Activated CD4-positive, alpha-beta memory T cell treated with anti-CD3 and anti-CD28 coated beads for 36 hours (primary cell): ENCODE measurements at regions of chr11 and their contacts with region 1.

Region 1: GRCh38 chr11:1837171-1838076 is 1.4 kb upstream of the TNNI2 start:
- DNase-seq: peak; percentile 83
- H3K4me3 Mint-ChIP-seq: no peak overlapping the region
- H3K27ac Mint-ChIP-seq: no peak overlapping the region
- H3K4me1 Mint-ChIP-seq: peaks cover 5% of the 10 kb centered on the region
- H3K27me3 Mint-ChIP-seq: peaks cover 3% of the 10 kb centered on the region

Region 2: DNA sequence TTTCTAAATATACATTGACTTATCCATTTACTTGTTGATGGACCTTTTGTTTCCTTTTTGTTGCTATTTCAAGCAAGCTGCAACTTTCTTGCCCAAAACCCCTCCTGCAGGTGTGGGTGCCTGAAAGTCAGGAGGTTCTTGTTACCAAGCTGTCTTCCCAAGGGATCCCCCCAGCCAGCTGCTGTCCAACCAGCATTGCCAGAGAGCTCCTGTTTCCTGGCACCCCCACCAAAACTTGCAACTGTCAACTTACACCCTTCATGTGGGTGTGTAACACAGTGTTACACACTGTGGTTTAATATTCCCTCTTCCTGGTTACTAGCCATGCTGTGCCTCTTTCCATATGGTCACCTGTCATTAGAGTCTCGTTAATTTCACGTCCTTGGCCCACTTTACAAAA is 250.7 kb before region 1 on chr11:
- CTCF ChIA-PET with region 1: no interaction called
- POLR2A ChIA-PET with region 1: no interaction called
- intact Hi-C with region 1: no loop called
- DNase-seq: no peak
- H3K4me3 Mint-ChIP-seq: no peak overlapping the region
- H3K27ac Mint-ChIP-seq: no peak overlapping the region
- H3K4me1 Mint-ChIP-seq: peaks cover 21% of the 10 kb centered on the region
- H3K27me3 Mint-ChIP-seq: peaks cover 2% of the 10 kb centered on the region

Region 3: GRCh38 chr11:2002807-2003206 is 165.4 kb after region 1 on chr11:
- CTCF ChIA-PET with region 1: interaction called, 72 read pairs
- POLR2A ChIA-PET with region 1: no interaction called
- intact Hi-C with region 1: no loop called
- DNase-seq: no peak
- H3K4me3 Mint-ChIP-seq: no peak overlapping the region
- H3K27ac Mint-ChIP-seq: no peak overlapping the region
- H3K4me1 Mint-ChIP-seq: no peaks in the 10 kb centered on the region
- H3K27me3 Mint-ChIP-seq: no peaks in the 10 kb centered on the region